Activated T-helper 2 cell treated with anti-CD3 and anti-CD28 coated beads, Interferon-gamma antibody, Interleukin-2, Interleukin-4, amounts not matched to agents 10 μg/mL and 5 μg/mL and 100 μg/mL, durations not matched to agents 14 hours and 24 hours and 36 hours (primary cell): ENCODE measurements at regions of chr7 and their contacts with region 1.

Region 1: DNA sequence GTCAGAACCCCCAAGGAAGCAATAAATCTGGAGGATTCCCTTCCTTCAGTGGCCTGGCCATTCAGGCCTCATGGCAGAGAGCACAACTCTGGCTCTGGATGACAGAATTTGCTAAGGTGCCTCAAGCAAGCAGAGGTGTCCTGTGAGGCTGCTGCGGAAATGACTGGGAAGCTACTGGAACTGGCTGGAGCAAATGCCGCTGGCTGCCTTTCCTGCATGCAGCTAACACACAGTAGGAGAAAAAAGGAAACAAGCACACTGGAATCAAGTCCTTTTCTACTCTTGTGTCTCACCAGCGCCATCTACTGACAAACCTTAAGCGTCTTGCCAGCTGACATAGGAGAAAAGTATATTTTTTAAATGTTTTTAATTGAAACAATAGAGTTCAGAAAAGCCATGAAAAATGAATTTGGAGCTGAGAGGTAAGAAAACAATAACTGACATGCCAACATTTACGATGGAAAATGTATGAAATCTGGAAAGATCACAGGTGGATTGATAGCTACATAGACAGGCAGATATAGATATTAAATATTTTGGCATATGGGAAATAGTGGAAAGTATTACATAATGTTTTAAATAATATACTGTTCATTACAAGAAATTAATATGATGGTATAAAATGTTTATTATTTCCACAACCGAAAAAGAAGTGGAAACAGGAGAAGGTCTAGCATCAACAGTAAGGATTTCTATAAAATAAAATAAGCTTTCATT is 951.6 kb downstream of the ANKRD7 start:
- DNase-seq: no peak
- H3K4me3 Mint-ChIP-seq: no peak overlapping the region
- H3K27ac Mint-ChIP-seq: no peak overlapping the region
- H3K4me1 Mint-ChIP-seq: no peaks in the 10 kb centered on the region
- H3K27me3 Mint-ChIP-seq: no peaks in the 10 kb centered on the region

Region 2: GRCh38 chr7:118259115-118259514 is 917.0 kb before region 1 on chr7:
- intact Hi-C with region 1: loop called (anchors 5 kb)
- DNase-seq: no peak
- H3K4me3 Mint-ChIP-seq: no peak overlapping the region
- H3K27ac Mint-ChIP-seq: no peak overlapping the region
- H3K4me1 Mint-ChIP-seq: no peaks in the 10 kb centered on the region
- H3K27me3 Mint-ChIP-seq: peaks cover 21% of the 10 kb centered on the region

Region 3: DNA sequence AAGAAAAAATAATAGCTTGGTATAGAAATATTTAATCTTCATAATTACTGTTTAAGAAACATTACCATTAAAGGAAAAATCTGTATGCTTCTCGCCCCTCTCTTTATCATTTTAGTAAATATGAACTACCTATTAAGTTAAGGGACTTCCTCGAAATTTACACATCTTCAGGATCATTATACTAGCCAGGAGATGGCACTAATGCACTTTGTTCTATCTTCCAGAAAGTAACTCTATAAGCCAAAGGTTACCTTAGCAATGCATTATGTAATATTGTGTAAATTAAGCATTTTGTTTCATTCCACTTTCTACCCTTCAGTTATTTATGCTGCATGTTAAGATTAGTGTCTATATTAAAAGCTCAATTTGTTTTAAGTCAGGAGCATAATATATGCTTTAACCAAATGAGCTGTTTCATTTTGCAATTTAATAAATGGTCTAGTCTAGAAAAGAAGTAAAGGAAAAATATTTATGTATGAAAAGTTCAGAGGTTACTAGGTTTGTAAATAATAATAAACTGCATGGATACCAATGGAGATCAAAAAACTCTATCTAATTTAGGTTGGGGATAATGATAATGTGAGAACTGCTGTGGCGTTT is 823.1 kb before region 1 on chr7:
- intact Hi-C with region 1: loop called (anchors 10 kb)
- DNase-seq: no peak
- H3K4me3 Mint-ChIP-seq: no peak overlapping the region
- H3K27ac Mint-ChIP-seq: no peak overlapping the region
- H3K4me1 Mint-ChIP-seq: peaks cover 12% of the 10 kb centered on the region
- H3K27me3 Mint-ChIP-seq: no peaks in the 10 kb centered on the region